Left ventricle myocardium superior (tissue), 1 donor: ENCODE measurements at regions of chr21 and their contacts with region 1.

Region 1: DNA sequence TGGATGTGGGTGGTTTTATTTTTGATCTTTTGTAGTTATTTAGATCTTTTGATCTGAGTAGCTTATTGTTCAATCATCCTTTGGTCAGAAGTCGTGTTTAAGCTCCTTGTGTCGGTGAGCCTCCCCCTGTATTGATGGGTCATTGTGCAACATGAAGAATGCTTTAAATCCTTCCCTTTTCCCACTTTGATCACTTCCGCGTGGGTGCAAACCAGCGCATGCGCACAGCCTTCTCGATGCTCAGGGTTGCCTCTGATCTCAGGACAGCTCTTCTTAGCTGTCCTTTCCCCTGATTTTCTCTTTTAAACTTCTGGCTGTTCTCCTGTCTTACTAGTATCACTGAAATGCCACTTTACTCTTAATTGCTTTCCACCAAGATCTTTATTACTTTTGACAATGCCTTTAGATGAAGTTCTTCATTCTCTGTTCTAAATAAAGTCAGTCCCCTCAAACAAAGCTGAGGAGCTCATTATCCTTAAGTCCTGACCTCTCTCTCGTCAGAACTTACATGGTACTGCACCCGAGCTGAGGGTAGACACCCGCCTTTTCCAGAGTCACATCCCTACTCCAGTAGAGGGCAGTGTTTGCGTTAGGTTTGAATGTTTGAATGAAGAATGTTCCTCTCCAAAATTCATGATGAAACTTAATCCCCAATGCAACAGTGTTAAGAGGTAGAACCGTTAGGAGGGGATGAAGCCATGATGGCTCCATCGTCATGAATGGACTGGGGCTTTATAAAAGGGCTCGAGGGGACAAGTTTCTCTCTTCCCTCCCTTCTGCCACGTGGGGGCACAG is 547.9 kb upstream of the TMPRSS15 start:
- DNase-seq: no peak
- ATAC-seq: peak; percentile 48

Region 2: DNA sequence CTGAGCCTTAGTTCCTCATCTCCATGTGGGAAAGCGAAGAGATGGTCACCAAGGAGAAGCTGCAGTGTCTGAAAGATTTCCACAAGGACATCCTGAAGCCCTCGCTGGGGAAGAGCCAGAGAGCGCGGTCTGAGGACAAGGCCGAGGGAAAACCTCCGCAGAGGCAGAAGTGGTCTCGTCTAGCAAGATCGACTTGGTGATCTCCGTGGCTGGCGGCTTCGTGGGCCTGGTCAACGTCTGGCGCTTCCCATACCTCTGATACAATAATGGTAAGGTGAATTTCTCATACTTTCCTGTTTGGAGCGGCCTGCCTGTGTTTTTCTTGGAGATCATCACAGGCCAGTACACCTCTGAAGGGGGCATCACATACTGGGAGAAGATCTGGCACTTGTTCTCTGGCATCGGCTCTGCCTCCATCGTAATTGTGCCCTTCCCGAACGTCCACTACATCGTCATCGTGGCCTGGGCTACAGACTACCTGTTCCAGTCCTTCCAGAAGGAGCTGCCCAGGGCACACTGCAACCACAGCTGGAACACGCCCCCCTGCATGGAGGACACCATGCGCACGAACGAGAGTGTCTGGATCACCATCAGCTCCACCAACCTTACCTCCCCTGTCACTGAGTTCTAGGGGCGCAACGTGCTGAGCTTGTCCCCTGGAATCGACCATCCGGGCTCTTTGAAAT is 293.2 kb after region 1 on chr21:
- intact Hi-C with region 1: loop called (anchors 10 kb)
- DNase-seq: no peak
- ATAC-seq: no peak